Heart left ventricle (tissue), 16 donors: ENCODE measurements at regions of chr17 and their contacts with region 1.

Region 1: DNA sequence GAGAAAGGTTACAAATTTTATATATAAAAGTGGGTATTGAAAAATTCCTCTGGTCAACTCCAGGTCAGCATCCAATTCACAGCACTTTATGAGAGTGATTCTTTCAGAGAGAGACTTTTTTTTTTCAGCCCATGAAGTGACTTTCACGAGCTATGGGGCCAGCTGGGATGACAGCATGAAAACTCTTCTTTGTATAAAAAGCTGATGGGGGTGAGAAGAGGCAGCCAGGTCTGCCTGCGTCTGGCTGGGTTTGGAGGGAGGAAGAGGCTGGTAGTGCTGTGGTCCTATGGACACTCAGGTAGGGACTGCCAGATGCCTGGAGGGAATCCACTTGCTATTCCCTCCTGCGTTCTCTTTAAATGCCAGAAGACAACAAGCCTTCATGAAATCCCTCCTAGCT is 250.6 kb downstream of the UTP18 start:
- DNase-seq: no peak
- ATAC-seq: no peak
- H3K4me3 ChIP-seq: no peak overlapping the region
- H3K27ac ChIP-seq: no peak overlapping the region
- H3K4me1 ChIP-seq: no peaks in the 10 kb centered on the region
- H3K27me3 ChIP-seq: peaks cover 0 to 7% (median 0%) of the 10 kb centered on the region in 9 donors
- CTCF ChIP-seq: no peak
- POLR2A ChIP-seq: no peak

Region 2: GRCh38 chr17:51445946-51446533 is 64.9 kb before region 1 on chr17:
- intact Hi-C with region 1: no loop called
- DNase-seq: no peak
- ATAC-seq: no peak
- H3K4me3 ChIP-seq: no peak overlapping the region
- H3K27ac ChIP-seq: no peak overlapping the region
- H3K4me1 ChIP-seq: no peaks in the 10 kb centered on the region
- H3K27me3 ChIP-seq: no peaks in the 10 kb centered on the region
- CTCF ChIP-seq: no peak
- POLR2A ChIP-seq: no peak

Region 3: DNA sequence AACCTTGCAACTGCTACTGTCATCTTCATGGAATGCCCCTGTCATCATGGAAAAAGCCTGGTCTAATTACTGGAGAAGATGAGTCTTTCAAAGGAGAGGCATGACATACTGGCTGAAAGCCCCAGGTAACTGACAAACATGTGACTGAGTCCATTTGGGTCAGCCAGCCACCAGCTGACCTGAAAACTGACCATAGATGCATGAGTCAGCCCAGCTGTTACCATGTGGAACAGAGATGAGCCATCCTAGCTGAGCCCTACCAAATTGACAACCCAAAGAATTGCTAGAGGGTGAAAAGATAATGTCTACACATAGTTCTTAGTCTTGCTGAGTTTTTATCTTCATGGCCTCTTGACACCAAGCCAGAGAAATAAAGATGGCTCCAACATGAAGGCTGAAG is 61.2 kb after region 1 on chr17:
- intact Hi-C with region 1: loop called in 1 of 10 experiments (anchors 10 kb)
- DNase-seq: no peak
- ATAC-seq: no peak
- H3K4me3 ChIP-seq: no peak overlapping the region
- H3K27ac ChIP-seq: no peak overlapping the region
- H3K4me1 ChIP-seq: no peaks in the 10 kb centered on the region
- H3K27me3 ChIP-seq: peaks cover 0 to 8% (median 0%) of the 10 kb centered on the region in 9 donors
- CTCF ChIP-seq: no peak
- POLR2A ChIP-seq: no peak